T-cell (primary cell): ENCODE measurements at regions of chr14 and their contacts with region 1.

Region 1: DNA sequence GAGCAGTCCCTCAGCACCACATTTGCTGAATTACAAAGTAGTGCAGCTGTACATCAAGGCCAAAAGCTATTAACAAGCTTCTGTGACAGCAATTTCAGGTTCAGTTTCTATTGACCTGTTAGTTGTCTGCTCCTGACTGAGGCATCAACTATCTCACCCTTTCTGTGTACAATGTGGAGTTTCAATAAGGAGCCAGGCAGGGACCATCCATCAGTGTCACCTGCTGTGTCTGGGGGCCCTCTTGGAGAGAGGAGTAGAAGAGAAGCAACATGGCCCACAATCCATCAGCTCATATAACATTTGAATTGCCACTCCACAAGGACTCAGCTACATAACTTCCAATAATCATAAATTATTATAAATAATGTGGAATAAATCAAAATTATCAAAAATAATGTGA is 72.3 kb upstream of the CCDC196 start:
- DNase-seq: no peak
- ATAC-seq: no peak
- H3K4me3 ChIP-seq: no peak overlapping the region
- H3K4me3 Mint-ChIP-seq: no peak overlapping the region
- H3K27ac ChIP-seq: no peak overlapping the region
- H3K27ac Mint-ChIP-seq: no peak overlapping the region
- H3K4me1 ChIP-seq: no peaks in the 10 kb centered on the region
- H3K4me1 Mint-ChIP-seq: no peaks in the 10 kb centered on the region
- H3K27me3 ChIP-seq: no peaks in the 10 kb centered on the region
- H3K27me3 Mint-ChIP-seq: no peaks in the 10 kb centered on the region

Region 2: GRCh38 chr14:66444271-66444927 is 30.5 kb after region 1 on chr14:
- CTCF ChIA-PET with region 1: no interaction called
- POLR2A ChIA-PET with region 1: no interaction called
- DNase-seq: no peak
- ATAC-seq: no peak
- H3K4me3 ChIP-seq: no peak overlapping the region
- H3K4me3 Mint-ChIP-seq: no peak overlapping the region
- H3K27ac ChIP-seq: no peak overlapping the region
- H3K27ac Mint-ChIP-seq: no peak overlapping the region
- H3K4me1 ChIP-seq: no peaks in the 10 kb centered on the region
- H3K4me1 Mint-ChIP-seq: no peaks in the 10 kb centered on the region
- H3K27me3 ChIP-seq: no peaks in the 10 kb centered on the region
- H3K27me3 Mint-ChIP-seq: no peaks in the 10 kb centered on the region

Region 3: DNA sequence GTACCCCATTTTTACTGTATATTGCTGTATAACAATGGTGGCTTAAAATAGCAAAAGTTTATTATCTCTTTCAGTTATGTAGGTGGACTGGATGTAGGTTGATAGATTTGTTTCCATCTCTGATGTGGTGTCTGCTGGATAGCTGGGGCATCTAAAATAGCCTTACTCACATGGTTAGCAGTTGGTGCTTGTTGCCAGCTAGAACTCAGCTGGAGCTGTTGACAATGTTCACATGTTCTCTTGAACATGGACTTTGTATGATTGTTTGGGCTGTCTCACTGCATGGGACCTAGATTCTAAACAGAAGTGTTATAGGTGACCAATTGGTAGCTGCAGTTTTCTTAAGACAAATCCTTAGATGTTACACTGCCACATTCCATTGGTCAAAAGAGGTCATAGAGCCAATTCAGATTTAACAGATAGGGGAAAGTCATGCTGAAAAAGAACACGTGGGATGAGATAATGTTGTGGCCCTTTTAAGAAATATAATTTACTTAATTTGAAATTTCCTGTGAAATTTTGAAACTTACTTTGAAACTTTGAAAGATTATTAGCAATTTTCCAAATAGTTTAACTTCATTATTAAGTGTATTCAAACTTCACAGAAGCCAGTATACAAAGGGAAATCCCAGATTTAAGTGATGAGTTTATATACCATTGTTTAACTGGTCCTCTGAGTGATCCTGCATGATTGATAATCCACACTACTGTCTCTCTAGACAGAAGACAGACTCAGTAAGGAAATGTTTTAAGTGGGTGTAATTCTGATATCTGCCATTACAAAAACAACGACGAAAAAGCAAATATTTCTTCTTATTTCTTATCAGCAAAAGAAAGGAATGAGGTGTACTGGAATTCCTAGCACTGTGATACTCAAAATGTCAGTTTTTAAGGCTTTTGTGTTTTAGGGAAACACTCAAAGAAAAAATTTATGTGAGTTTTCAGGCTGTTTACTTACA is 221.3 kb after region 1 on chr14:
- CTCF ChIA-PET with region 1: no interaction called
- POLR2A ChIA-PET with region 1: interaction called in 1 of 2 experiments, 11 read pairs
- DNase-seq: no peak
- ATAC-seq: no peak
- H3K4me3 ChIP-seq: no peak overlapping the region
- H3K4me3 Mint-ChIP-seq: no peak overlapping the region
- H3K27ac ChIP-seq: no peak overlapping the region
- H3K27ac Mint-ChIP-seq: no peak overlapping the region
- H3K4me1 ChIP-seq: no peaks in the 10 kb centered on the region
- H3K4me1 Mint-ChIP-seq: peaks cover 0 to 5% (median 3%) of the 10 kb centered on the region in 3 donors
- H3K27me3 ChIP-seq: no peaks in the 10 kb centered on the region
- H3K27me3 Mint-ChIP-seq: no peaks in the 10 kb centered on the region